Dorsolateral prefrontal cortex (tissue), 120 donors: ENCODE measurements at regions of chr6 and their contacts with region 1.

Region 1: DNA sequence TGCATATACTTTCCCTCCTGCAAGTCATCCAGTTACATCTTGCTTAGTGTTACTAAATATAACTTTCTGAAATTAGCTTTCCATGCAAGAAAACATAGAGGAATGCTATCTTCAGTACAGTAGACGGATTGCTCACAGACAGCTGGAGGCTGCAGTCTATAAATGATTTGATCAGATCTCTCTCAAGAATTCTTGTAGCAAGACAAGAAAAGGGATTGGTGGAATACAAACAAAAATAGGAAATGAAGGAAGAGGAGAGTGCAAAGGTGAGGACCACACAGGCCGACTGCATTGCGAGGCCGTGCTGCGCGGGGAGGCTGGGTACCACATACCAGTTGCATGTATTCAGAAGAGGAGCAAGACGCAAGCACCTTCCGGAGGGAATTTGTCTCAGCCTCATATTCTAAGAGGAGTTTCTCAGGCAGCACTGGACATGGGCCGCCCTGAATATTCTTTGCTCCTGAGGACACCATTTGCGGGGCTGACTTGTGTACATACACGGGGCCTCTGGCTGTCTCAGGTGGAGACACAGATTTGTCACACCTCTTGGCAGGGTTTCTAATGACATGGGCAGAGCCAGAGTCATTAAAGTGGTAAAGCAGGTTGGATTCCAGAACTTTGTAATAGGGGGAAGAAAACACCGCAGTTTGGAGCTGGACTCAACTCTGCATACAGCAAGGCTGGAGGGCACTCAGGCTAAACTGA is 22.7 kb upstream of the KIF25 start:
- DNase-seq: no peak
- H3K4me3 ChIP-seq: no peak overlapping the region
- H3K27ac ChIP-seq: peak overlapping the region in 12 of 59 donors; percentile 7 to 52 (median 19)
- H3K27me3 ChIP-seq: no peaks in the 10 kb centered on the region
- CTCF ChIP-seq: no peak

Region 2: DNA sequence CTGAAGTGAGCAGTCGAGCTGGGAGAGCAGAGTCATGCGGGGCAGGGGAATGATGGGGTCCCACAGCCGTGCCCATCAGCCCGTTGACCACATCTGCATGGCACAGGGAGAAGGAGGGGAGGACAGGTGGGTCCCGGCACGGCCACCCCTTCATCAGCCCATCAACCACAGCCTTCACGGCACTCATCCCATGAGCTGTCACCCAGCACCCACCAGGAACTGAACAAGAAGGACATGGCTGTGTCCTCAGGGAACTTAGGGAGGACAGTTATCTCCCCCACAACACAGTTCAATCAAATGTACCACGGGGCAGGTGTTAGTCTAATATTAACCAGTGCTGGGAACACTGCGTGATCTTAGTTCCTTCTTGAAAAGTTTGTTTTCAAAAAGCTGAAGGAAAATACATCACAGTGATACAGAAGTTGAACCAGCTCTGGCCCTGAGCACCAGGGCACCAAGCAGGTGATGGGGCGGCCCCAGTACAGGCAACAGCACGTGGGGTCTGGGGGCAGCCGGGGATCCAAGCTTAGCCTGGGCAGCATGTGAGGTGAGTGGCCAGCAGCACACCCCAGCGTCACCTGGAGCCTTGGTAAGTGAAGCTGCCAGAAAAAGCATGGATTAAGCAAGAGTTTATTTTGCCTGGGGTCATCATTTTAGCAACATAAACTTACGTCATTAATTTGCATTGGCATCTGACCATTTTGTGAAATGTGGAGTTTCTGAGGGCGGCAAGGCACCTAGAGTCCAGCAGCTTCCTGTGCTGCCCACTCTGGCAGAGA is 183.6 kb before region 1 on chr6:
- intact Hi-C with region 1: no loop called
- DNase-seq: no peak
- H3K4me3 ChIP-seq: no peak overlapping the region
- H3K27ac ChIP-seq: no peak overlapping the region
- H3K27me3 ChIP-seq: peaks cover 0 to 10% (median 0%) of the 10 kb centered on the region in 45 donors
- CTCF ChIP-seq: no peak

Region 3: GRCh38 chr6:168045141-168045691 is 70.4 kb after region 1 on chr6:
- intact Hi-C with region 1: loop called in 1 of 2 experiments (anchors 5 kb)
- DNase-seq: peak in 2 of 10 donors; percentile 20 to 37
- H3K4me3 ChIP-seq: no peak overlapping the region
- H3K27ac ChIP-seq: peak overlapping the region in 6 of 59 donors; percentile 10 to 53 (median 20)
- H3K27me3 ChIP-seq: no peaks in the 10 kb centered on the region
- CTCF ChIP-seq: peak in 1 of 56 donors; percentile 5